H1 (cell line): ENCODE measurements at regions of chr19 and their contacts with region 1.

Region 1: GRCh38 chr19:46495787-46496101 is at the start of gene PNMA8B:
- DNase-seq: peak; percentile 78 to 94
- H3K4me3 ChIP-seq: peak within 1 kb of the TSS; percentile 23 to 59 (median 36); a peak in 6 of 8 replicates
- H3K27ac ChIP-seq: no peak within 1 kb of the TSS
- H3K4me1 ChIP-seq: peaks cover 5 to 24% (median 20%) of the 10 kb centered on the region in 4 experiments
- H3K27me3 ChIP-seq: peaks cover 17 to 49% (median 46%) of the 10 kb centered on the region in 4 experiments
- CTCF ChIP-seq: no peak
- EP300 ChIP-seq: no peak
- POLR2A ChIP-seq: no peak
- RAD21 ChIP-seq: 0 out of 4 replicates have a peak, but pooled peaks of 1 of the 2 experiments have one; percentile 7
- total RNA-seq, gene PNMA8B: 1.2 and 1.4 TPM in 2 replicates

Region 2: DNA sequence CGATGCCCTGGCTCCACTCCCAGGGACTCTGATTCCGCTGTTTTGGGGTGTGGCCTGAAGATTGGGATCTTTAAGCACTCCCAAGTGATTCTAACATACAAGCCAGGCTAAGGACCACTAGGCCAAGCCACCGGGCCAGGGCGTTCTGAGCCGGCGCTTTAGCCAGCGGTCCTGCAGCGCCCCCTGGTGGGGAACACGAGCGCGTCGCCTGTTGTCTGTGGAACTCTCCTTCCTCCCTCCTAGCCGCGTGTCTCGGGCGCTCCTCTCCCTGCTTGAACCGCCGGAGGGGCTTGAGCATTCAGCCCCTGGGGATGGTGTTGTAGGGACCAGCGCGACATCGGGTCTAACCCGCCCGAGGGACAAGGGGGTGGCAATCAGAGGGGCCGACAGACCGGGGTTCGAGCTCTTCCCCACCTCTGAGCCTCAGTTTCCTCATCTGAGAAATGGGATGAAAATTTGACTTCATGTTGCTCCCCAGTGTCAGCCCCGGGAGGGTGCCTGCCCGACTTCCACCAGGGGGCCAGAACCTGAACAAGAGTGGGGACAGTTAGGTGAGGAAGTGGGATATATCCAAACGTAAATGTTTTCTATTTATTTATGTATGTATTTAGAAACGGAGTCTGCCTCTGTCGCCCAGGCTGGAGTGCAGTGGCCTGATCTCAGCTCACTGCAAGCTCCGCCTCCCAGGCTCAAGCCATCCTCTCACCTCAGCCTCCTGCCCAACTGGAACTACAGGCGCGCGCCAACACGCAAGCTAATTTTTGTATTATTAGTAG is 17.9 kb after region 1 on chr19:
- CTCF ChIA-PET with region 1: interaction called, 12 read pairs
- POLR2A ChIA-PET with region 1: interaction called, 6 read pairs
- DNase-seq: peak; percentile 65 to 99
- H3K4me3 ChIP-seq: no peak overlapping the region
- H3K27ac ChIP-seq: no peak overlapping the region
- H3K4me1 ChIP-seq: no peaks in the 10 kb centered on the region
- H3K27me3 ChIP-seq: no peaks in the 10 kb centered on the region
- CTCF ChIP-seq: peak; percentile 87 to 98 (median 91)
- EP300 ChIP-seq: no peak
- POLR2A ChIP-seq: no peak
- RAD21 ChIP-seq: peak; percentile 97 to 99

Region 3: GRCh38 chr19:46863818-46864611 is 368.3 kb after region 1 on chr19:
- CTCF ChIA-PET with region 1: no interaction called
- POLR2A ChIA-PET with region 1: no interaction called
- DNase-seq: peak; percentile 44 to 65
- H3K4me3 ChIP-seq: peak overlapping the region; percentile 74 to 88 (median 85); a peak in 7 of 8 replicates
- H3K27ac ChIP-seq: peak overlapping the region; percentile 39; the same call in 1 of the 2 replicates
- H3K4me1 ChIP-seq: peaks cover 6 to 21% (median 10%) of the 10 kb centered on the region in 4 experiments; a peak in 6 of 7 replicates
- H3K27me3 ChIP-seq: no peaks in the 10 kb centered on the region
- CTCF ChIP-seq: no peak
- EP300 ChIP-seq: no peak
- POLR2A ChIP-seq: no peak; a peak in 1 of 3 replicates
- RAD21 ChIP-seq: no peak